CD8-positive, alpha-beta T cell (primary cell): ENCODE measurements at regions of chr4 and their contacts with region 1.

Region 1: DNA sequence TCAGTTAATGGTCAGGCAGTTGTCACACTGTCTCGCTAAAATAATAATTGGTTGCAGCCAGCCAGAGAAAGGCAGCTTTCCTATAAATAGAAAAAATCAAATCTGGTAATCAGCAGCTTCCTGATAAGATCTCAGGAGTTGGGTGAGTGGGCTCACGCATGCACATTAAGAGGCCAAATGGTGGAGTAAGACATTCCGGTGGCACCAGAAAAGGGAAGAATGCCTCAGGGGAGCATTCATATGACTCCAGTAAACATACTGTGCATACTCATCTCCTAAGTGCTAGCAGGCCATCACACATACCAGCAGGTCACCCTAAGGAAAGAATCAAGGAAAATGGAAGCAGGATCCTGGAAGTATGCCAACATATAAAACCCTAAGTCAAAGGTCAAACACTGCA is 40.1 kb downstream of the UGT2B15 start:
- DNase-seq: no peak
- ATAC-seq: no peak
- H3K4me3 ChIP-seq: no peak overlapping the region
- H3K4me3 Mint-ChIP-seq: no peak overlapping the region
- H3K27ac ChIP-seq: no peak overlapping the region
- H3K27ac Mint-ChIP-seq: no peak overlapping the region
- H3K4me1 ChIP-seq: no peaks in the 10 kb centered on the region
- H3K4me1 Mint-ChIP-seq: no peaks in the 10 kb centered on the region
- H3K27me3 ChIP-seq: no peaks in the 10 kb centered on the region
- H3K27me3 Mint-ChIP-seq: peaks cover 3% of the 10 kb centered on the region
- CTCF ChIP-seq: no peak

Region 2: DNA sequence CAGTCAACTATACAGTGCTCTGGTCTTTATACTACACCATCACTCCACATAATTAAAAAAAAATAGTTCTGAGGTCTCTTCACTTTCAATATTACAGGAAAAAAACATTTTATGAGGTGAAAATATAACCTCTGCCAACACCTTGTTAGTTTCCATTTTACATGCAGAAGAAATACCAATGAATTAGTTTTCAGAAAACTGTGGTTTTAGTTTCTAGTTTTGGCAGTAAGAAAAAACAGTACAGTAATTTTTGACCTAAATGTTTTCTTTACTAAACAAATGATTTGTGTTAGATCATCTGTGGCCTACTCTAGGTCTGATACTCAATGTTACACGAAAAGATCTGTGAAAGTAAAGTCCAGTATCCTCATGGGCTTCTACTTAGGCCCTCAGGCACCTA is 1219.6 kb after region 1 on chr4:
- CTCF ChIA-PET with region 1: no interaction called
- POLR2A ChIA-PET with region 1: no interaction called
- intact Hi-C with region 1: loop called in 1 of 2 experiments (anchors 5 kb)
- DNase-seq: no peak
- ATAC-seq: no peak
- H3K4me3 ChIP-seq: no peak overlapping the region
- H3K4me3 Mint-ChIP-seq: no peak overlapping the region
- H3K27ac ChIP-seq: no peak overlapping the region
- H3K27ac Mint-ChIP-seq: no peak overlapping the region
- H3K4me1 ChIP-seq: no peaks in the 10 kb centered on the region
- H3K4me1 Mint-ChIP-seq: no peaks in the 10 kb centered on the region
- H3K27me3 ChIP-seq: no peaks in the 10 kb centered on the region
- H3K27me3 Mint-ChIP-seq: no peaks in the 10 kb centered on the region
- CTCF ChIP-seq: no peak